HEK293 (cell line): ENCODE measurements at regions of chr3 and their contacts with region 1.

Region 1: DNA sequence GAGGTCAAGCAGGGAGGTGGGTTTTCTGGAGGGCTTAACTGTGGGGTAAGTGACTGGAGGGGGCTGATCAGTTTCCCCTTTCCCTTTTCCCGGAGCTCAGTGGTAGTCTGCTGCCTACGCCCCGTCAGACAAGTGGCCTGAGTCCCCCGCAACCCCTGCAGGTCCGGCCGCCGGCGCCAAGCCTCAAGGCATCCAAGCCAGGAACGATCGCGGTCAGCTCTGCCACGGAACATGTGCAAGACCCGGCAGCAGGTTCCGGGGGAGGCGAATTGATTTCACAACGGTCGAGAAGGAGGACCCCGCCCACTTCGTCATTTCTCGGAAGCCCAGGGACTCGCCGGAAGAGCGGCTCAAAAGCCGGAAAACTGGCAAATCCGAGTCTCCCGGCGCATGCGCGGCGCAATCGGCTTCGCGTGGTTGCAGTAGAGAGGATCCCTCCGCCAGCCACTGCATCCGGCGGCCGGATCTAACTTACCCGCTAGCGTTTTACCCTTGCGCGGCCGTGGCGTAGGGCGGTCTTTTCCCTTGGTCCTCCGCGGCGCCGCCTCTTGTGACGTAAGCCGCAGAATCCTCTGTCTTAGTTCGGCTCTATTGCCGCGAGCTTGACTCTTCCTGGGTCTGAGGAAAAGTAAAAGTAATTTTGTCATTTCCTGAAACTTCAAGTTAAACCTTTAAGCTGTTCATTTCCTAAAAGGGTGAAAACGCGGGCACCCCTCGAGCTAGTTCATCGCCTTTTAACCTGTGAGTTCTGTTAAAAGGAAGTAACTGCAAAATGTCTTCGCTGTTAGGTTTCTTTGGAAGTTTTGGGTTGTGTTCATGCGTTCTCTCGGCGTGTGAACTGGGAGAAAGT is 14.9 kb upstream of the CCNL1 start:
- H3K4me3 ChIP-seq: peak overlapping the region; percentile 62
- H3K27ac ChIP-seq: peak overlapping the region; percentile 68
- H3K4me1 ChIP-seq: no peaks in the 10 kb centered on the region
- CTCF ChIP-seq: no peak

Region 2: DNA sequence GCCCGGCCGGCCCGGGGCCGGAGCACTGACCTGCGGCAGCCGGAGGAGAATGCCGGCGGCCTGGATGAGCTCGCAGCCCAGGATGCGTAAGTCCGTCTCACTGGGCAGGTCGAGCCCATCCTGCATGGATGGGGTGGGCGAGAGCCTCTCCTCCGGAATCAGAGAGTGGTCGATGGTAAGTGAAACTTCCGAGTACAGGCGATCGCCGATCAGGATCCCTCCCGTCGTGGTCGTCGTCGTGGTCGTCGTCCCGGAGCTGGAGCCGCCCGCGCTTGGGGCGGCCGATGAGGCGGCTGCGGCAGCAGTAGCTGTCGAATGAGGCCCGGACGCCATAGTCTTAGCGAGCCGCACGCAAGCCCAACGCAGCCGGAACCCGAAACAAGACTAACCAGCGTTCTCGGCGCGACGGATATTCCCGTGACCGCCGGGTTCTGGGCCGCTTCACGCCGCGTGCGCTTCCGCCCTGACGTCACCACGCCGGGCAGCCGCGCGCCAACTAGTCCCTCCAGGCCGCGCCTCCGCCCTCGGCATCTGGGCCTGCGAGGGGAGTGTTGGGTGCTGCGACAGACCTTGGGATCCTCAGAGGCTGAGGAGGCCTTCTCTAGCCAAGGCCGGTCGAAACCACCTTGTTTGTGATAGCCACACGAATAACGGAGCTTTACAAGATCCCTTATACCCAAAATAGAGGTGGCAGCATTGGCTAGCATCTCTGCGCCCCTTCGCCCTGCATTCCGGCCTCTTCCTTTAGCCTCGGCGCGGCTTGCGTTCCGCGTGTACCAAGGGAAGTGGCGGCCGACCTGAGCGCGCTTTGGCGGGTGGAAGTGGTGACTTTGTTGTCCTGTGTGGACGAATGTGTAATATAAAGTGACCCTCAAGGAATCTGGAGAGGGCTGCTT is 14.9 kb before region 1 on chr3 and contains the start of gene CCNL1:
- CTCF ChIA-PET with region 1: interaction called, 9 read pairs
- POLR2A ChIA-PET with region 1: interaction called, 159 read pairs
- H3K4me3 ChIP-seq: peak within 1 kb of the TSS; percentile 95
- H3K27ac ChIP-seq: peak within 1 kb of the TSS; percentile 82
- H3K4me1 ChIP-seq: peaks cover 9% of the 10 kb centered on the region
- CTCF ChIP-seq: no peak